Breast epithelium (tissue), 4 donors: ENCODE measurements at regions of chr3 and their contacts with region 1.

Region 1: DNA sequence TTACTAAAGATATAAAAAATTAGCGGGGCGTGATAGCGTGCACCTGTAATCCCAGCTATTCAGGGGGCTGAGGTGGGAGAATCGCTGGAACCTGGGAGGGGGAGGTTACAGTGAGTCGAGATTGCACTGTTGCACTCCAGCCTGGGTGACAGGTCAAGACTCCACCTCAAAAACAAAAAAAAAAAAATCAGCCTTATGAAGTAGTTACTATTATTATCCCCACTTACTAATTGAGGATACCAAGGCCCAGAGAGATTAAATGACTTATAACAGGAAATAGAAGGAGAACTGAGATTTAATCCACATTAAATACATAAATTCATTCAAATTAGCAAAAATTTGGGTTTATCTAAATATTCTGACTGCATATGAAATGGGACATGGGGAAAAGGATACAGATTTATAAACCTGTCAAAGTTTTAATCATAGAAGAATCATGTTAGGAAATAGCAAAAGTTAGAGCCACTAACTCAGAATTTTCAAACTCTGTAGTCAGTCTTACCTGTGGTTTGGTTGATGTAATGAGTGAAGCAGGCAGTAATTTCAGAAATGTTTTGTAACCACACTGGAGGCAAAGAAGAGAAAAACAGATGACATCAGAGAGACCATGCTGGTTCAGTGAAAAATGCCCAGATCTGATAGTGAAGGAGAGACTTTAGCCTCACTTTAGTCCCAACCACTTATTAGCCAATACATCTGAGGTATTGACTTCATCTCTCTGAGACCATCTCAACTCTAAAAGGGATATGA is 25.0 kb upstream of the ACAP2 start:
- DNase-seq: no peak
- H3K4me3 ChIP-seq: no peak overlapping the region
- H3K27ac ChIP-seq: no peak overlapping the region
- H3K4me1 ChIP-seq: no peaks in the 10 kb centered on the region
- H3K27me3 ChIP-seq: no peaks in the 10 kb centered on the region
- CTCF ChIP-seq: no peak
- POLR2A ChIP-seq: no peak

Region 2: GRCh38 chr3:195425849-195426248 is 42.0 kb before region 1 on chr3:
- intact Hi-C with region 1: no loop called
- DNase-seq: no peak
- H3K4me3 ChIP-seq: no peak overlapping the region
- H3K27ac ChIP-seq: no peak overlapping the region
- H3K4me1 ChIP-seq: no peaks in the 10 kb centered on the region
- H3K27me3 ChIP-seq: no peaks in the 10 kb centered on the region
- CTCF ChIP-seq: no peak
- POLR2A ChIP-seq: no peak

Region 3: GRCh38 chr3:195441976-195442572 is 25.7 kb before region 1 on chr3:
- intact Hi-C with region 1: loop called (anchors 2 kb)
- DNase-seq: peak in 1 of 2 donors; percentile 30
- H3K4me3 ChIP-seq: peak overlapping the region; percentile 76 to 93 (median 82)
- H3K27ac ChIP-seq: peak overlapping the region; percentile 88 to 97
- H3K4me1 ChIP-seq: no peaks in the 10 kb centered on the region
- H3K27me3 ChIP-seq: no peaks in the 10 kb centered on the region
- CTCF ChIP-seq: no peak
- POLR2A ChIP-seq: no peak

Region 4: DNA sequence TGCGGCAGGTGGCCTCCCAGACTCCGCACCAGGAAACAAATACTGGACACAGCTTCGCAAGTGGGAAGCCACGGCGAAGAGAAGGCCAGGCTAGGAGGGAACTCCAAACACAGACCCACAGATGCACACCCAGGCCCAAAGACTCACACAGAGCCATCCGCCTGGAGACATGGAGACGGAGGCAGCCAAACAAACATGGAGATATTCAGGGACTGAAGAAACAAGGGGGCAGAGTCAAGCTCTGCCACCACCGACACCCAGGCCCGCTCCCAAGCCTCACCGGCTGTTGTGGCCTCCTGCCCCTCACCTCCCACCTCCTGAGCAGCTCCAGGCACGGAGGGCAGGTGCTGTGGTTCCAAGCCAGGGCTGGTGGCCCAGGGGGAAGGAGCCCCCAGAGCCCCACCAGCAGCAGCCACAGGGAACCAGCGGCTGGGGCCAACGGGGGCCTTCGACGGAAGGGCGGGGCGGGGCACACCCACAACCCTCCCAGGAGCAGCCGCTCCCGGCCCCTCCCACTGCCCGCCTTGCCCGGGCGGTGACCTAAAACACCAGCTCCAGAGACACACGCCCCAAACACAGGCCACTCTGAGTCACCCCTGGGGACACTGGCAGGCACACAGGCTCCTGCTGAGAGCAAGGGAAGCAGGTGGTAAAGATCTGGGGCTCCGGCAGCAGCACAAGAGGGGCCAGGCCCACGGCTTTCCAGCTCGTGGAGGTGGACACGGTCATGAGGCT is 408.6 kb after region 1 on chr3:
- intact Hi-C with region 1: no loop called
- DNase-seq: no peak
- H3K4me3 ChIP-seq: no peak overlapping the region
- H3K27ac ChIP-seq: no peak overlapping the region
- H3K4me1 ChIP-seq: no peaks in the 10 kb centered on the region
- H3K27me3 ChIP-seq: no peaks in the 10 kb centered on the region
- CTCF ChIP-seq: no peak
- POLR2A ChIP-seq: no peak

Region 5: GRCh38 chr3:196677353-196677752 is 1209.5 kb after region 1 on chr3:
- intact Hi-C with region 1: no loop called
- DNase-seq: peak in 1 of 2 donors; percentile 14
- H3K4me3 ChIP-seq: no peak overlapping the region
- H3K27ac ChIP-seq: no peak overlapping the region
- H3K4me1 ChIP-seq: no peaks in the 10 kb centered on the region
- H3K27me3 ChIP-seq: peaks cover 0 to 4% of the 10 kb centered on the region in 2 donors
- CTCF ChIP-seq: no peak
- POLR2A ChIP-seq: no peak